PC-9 (cell line): ENCODE measurements at regions of chr17 and their contacts with region 1.

Region 1: DNA sequence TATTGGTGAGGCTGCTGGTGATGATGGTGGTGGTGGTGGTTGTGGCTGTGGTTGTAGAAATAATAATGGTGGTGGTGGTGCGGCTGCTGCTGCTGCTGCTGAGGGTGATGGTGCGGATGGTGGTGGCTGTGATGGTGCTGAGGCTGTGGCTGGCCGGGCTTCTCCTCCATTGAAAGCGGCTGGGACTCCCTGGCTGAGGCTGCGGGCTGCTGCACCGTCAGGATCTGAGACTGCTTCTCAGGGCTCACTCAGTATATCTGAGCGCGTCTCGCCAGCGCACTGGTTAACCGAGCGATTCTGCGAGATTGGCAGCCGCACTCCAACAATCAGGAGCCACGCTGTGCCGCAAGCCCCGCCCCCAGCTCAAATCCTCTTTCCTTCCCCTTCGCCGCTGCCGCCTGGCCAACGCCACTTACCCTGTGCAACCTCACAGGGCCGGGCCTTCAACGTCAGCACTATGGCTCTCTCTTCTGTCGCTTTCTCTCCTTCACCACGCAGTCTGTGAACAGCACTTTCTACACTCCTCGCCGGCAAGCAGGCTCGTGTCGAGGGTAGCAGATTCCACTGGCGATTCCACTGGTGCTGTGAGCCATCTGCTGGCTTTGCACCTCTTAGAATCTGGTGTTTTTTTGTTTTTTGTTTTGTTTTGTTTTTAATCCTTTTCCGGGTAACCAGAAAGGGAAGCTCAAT is at the start of gene NUFIP2:
- DNase-seq: peak; percentile 93 to 98
- H3K4me3 ChIP-seq: peak within 1 kb of the TSS; percentile 92
- H3K27ac ChIP-seq: peak within 1 kb of the TSS; percentile 78
- H3K4me1 ChIP-seq: peaks cover 33% of the 10 kb centered on the region
- H3K27me3 ChIP-seq: no peaks in the 10 kb centered on the region
- CTCF ChIP-seq: no peak
- total RNA-seq, gene NUFIP2: 46.8 and 73.1 TPM in 2 replicates

Region 2: GRCh38 chr17:28951991-28952975 is 341.8 kb before region 1 on chr17:
- CTCF ChIA-PET with region 1: no interaction called
- POLR2A ChIA-PET with region 1: interaction called, 11 read pairs
- intact Hi-C with region 1: no loop called
- DNase-seq: peak; percentile 94 to 97
- H3K4me3 ChIP-seq: peak overlapping the region; percentile 92
- H3K27ac ChIP-seq: peak overlapping the region; percentile 94
- H3K4me1 ChIP-seq: peaks cover 20% of the 10 kb centered on the region
- H3K27me3 ChIP-seq: no peaks in the 10 kb centered on the region
- CTCF ChIP-seq: no peak

Region 3: GRCh38 chr17:29148790-29149430 is 145.1 kb before region 1 on chr17:
- CTCF ChIA-PET with region 1: interaction called, 6 read pairs
- POLR2A ChIA-PET with region 1: interaction called, 9 read pairs
- intact Hi-C with region 1: loop called (anchors 2 kb)
- DNase-seq: peak; percentile 72 to 94
- H3K4me3 ChIP-seq: peak overlapping the region; percentile 41; the same call in 1 of the 2 replicates
- H3K27ac ChIP-seq: peak overlapping the region; percentile 91
- H3K4me1 ChIP-seq: peaks cover 70% of the 10 kb centered on the region
- H3K27me3 ChIP-seq: no peaks in the 10 kb centered on the region
- CTCF ChIP-seq: peak; percentile 90

Region 4: GRCh38 chr17:29219378-29220047 is 74.5 kb before region 1 on chr17:
- CTCF ChIA-PET with region 1: interaction called, 3 read pairs
- POLR2A ChIA-PET with region 1: no interaction called
- intact Hi-C with region 1: loop called (anchors 5 kb)
- DNase-seq: peak; percentile 70 to 80
- H3K4me3 ChIP-seq: no peak overlapping the region
- H3K27ac ChIP-seq: no peak overlapping the region
- H3K4me1 ChIP-seq: peaks cover 13% of the 10 kb centered on the region
- H3K27me3 ChIP-seq: no peaks in the 10 kb centered on the region
- CTCF ChIP-seq: peak; percentile 95

Region 5: GRCh38 chr17:29369831-29370735 is 76.0 kb after region 1 on chr17:
- CTCF ChIA-PET with region 1: interaction called, 5 read pairs
- POLR2A ChIA-PET with region 1: interaction called, 4 read pairs
- intact Hi-C with region 1: loop called (anchors 5 kb)
- DNase-seq: peak; percentile 61 to 71
- H3K4me3 ChIP-seq: peak overlapping the region; percentile 10; the same call in 1 of the 2 replicates
- H3K27ac ChIP-seq: no peak overlapping the region
- H3K4me1 ChIP-seq: peaks cover 11% of the 10 kb centered on the region
- H3K27me3 ChIP-seq: no peaks in the 10 kb centered on the region
- CTCF ChIP-seq: peak; percentile 89

Region 6: DNA sequence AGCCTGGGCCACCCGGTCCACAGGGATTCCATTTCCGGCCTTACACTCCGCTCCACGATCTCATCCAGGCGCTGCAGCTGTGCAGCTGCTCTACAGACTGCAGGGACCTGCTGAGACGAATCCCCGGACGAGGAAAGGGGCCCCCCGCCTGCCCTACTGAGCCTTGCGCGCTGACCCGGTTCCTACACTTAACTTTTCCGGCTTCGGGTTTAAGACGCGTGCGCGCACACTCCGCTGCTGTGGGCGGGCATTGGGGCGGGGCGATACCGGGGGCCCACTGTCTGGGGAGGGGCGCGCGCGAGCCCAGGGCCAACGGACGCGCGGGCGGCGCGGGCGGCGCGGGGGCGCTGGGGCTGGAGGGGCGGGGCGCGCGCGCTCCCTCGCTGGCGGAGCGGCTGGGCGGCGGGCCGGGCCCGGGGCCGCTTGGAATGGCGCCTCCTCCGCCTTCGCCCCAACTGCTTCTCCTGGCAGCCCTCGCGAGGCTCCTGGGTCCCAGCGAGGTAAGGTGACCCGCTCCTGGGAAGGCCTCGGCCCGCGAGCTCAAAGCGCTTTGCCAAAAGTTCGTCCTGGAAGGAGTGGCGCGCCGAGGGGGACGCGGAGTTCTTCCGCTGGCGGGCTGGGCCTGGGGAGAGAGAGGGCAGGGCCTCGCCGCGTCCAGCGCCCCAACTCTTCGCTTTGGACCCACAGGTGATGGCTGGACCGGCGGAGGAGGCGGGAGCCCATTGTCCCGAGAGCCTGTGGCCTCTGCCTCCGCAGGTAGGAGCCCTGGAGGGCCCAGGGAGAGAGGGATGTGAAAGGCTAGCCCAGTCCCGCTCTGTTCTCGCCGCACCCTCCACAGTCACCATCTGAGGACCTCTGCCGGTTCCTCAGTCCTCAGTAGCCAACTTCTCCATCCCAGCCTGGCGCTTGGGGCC is 274.6 kb after region 1 on chr17 and contains the start of gene TP53I13:
- CTCF ChIA-PET with region 1: no interaction called
- POLR2A ChIA-PET with region 1: no interaction called
- intact Hi-C with region 1: loop called (anchors 2 kb)
- DNase-seq: peak; percentile 64 to 89
- H3K4me3 ChIP-seq: peak within 1 kb of the TSS; percentile 76
- H3K27ac ChIP-seq: peak within 1 kb of the TSS; percentile 53
- H3K4me1 ChIP-seq: peaks cover 28% of the 10 kb centered on the region
- H3K27me3 ChIP-seq: no peaks in the 10 kb centered on the region
- CTCF ChIP-seq: no peak
- total RNA-seq, gene TP53I13: 46.9 and 68.8 TPM in 2 replicates